ENCODE measurements at regions of chr5 and their contacts with region 1.

Region 1: DNA sequence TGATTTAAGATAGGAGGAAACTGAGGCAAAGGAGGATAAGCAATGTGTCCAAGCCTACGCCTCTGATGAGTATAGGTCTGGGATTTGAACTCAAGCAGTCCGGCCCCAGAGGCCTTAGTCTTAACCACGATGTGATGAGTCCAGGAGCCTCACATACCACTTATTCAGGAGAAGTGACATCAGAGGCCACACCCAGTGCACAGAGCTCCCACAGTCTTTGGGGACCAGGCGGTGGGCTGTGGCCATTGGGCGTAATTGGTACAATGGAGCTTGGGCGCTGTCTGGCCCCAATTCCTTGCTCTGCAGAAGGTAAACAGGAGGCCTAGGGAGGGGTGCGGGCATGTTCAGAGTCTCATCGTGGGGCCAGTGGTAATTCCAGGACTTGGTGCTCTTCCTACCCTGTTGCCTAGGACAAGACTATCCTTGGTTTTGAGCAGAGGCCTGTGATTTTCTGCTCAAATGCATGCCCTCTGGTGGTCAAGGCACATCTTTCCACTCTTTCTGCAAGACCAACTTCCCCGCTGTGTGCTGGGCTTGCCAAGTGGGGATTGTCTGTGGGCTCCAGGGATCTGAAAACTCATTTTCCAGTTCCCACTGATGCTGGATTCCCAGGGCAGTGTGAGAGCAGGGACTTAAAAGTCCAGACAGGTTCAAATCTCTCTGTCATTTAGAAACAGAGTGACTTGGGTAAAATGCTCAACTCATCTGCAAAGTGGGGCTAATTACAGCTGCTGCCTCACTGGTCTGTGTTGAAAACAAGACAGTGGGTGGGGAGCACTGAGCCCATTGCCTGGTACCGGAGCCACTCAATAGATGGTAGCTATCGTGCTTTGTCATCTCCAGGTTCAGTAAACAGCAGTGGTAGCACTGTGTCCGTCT is 15.8 kb downstream of the NDST1 start:
- DNase-seq: peak; percentile 75 to 87
- ATAC-seq: peak; percentile 81 to 87
- H3K4me3 ChIP-seq: no peak overlapping the region
- H3K27ac ChIP-seq: peak overlapping the region; percentile 52 to 92; a peak in 5 of 6 replicates
- H3K4me1 ChIP-seq: peaks cover 59% of the 10 kb centered on the region
- CTCF ChIP-seq: peak; percentile 75
- EP300 ChIP-seq: no peak
- POLR2A ChIP-seq: no peak
- RAD21 ChIP-seq: peak; percentile 74 to 82

Region 2: DNA sequence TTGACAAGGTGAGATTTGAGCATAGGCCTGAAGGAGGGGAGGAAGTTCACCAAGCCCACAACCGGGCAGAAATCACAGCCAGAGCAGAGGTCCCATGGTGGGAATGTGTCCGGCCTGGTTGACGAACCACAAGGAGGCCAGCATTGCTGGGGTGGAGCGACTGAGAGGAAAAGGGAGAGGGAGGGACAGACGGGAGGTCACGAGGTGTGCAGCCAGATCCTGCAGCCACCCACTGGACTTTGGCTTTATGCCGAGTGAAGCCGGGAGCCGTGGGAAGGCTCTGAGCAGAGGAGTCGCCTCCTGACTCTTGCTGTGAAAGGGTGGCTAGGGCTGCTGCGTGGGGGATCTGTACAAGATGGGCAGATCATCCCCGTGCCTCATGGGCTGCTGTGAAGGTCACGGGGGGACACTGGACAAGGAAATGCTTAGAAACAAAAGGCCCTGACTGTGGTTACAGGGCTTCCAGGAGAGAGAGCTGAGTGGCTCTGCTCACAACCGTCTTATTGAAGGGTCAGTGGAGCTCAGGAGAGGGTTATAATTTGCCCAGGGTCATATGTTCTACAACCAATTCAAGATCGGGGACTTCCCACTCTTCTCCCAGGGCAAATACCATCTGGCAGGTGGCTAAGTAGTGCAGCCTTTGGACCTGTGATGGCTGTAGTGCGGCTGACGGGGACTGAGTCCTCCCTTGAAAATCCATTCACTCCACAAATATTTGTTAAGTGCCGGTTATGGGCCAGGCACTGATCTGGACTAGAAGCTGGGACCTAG is 95.4 kb before region 1 on chr5:
- CTCF ChIA-PET with region 1: no interaction called
- POLR2A ChIA-PET with region 1: no interaction called
- DNase-seq: no peak
- ATAC-seq: peak; percentile 47 to 58
- H3K4me3 ChIP-seq: no peak overlapping the region
- H3K27ac ChIP-seq: no peak overlapping the region
- H3K4me1 ChIP-seq: no peaks in the 10 kb centered on the region
- CTCF ChIP-seq: no peak
- EP300 ChIP-seq: no peak
- POLR2A ChIP-seq: no peak
- RAD21 ChIP-seq: no peak

Region 3: GRCh38 chr5:150449517-150450339 is 74.0 kb before region 1 on chr5 and contains the start of gene RPS14:
- CTCF ChIA-PET with region 1: interaction called, 32 read pairs
- POLR2A ChIA-PET with region 1: interaction called, 4 read pairs
- DNase-seq: peak; percentile 96
- ATAC-seq: peak; percentile 95
- H3K4me3 ChIP-seq: peak within 1 kb of the TSS; percentile 78
- H3K27ac ChIP-seq: peak within 1 kb of the TSS; percentile 96
- H3K4me1 ChIP-seq: peaks cover 33% of the 10 kb centered on the region
- CTCF ChIP-seq: peak; percentile 88
- EP300 ChIP-seq: no peak
- POLR2A ChIP-seq: peak; percentile 81
- RAD21 ChIP-seq: no peak
- polyA plus RNA-seq, gene RPS14: 3,799 and 4,312 TPM in 2 replicates

Region 4: DNA sequence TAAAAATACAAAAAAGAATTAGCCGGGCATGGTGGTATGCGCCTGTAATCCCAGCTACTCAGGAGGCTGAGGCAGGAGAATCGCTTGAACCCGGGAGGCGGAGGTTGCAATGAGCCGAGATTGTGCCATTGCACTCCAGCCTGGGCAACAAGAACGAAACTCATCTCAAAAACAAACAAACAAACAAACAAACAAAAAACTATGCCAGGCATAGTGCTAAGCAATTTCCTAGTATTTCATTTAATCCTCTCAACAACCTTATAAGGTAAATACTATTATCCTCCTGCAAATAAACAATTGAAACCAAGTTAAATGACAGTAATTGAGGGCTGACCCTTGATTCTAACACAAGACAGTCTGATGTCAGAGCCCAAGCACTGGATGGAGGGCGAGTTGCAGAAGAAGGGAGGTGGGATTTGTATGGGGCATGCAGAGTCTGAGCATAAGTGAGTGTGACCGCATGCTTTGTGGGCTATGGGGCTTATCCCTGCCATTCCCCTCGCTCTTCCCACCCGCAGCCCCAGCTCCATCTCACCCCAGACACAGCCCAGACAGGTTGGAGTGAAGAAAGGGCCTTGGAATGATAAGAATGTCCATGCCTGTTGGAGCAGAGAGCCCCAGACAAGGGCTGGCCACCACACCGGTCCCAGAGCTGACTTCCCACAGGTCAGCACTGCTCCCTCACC is 49.9 kb before region 1 on chr5:
- CTCF ChIA-PET with region 1: interaction called, 13 read pairs
- POLR2A ChIA-PET with region 1: no interaction called
- DNase-seq: peak in 1 of 2 experiments; percentile 90
- ATAC-seq: peak; percentile 72 to 83
- H3K4me3 ChIP-seq: no peak overlapping the region
- H3K27ac ChIP-seq: peak overlapping the region; percentile 86 to 96
- H3K4me1 ChIP-seq: peaks cover 58% of the 10 kb centered on the region
- CTCF ChIP-seq: no peak
- EP300 ChIP-seq: 0 out of 5 replicates have a peak, but pooled peaks of 1 of the 2 experiments have one; percentile 67
- POLR2A ChIP-seq: no peak
- RAD21 ChIP-seq: peak in 1 of 2 experiments; percentile 41; a peak in 1 of 5 replicates

Region 5: GRCh38 chr5:150538007-150538917 is 14.6 kb after region 1 on chr5:
- CTCF ChIA-PET with region 1: interaction called, 30 read pairs
- POLR2A ChIA-PET with region 1: no interaction called
- DNase-seq: no peak
- ATAC-seq: peak; percentile 39 to 45; a peak in 3 of 6 replicates
- H3K4me3 ChIP-seq: no peak overlapping the region
- H3K27ac ChIP-seq: no peak overlapping the region
- H3K4me1 ChIP-seq: peaks cover 25% of the 10 kb centered on the region
- CTCF ChIP-seq: no peak
- EP300 ChIP-seq: no peak
- POLR2A ChIP-seq: no peak
- RAD21 ChIP-seq: no peak

Measured in A549 (cell line).